B cell (primary cell): ENCODE measurements at regions of chr16 and their contacts with region 1.

Region 1: DNA sequence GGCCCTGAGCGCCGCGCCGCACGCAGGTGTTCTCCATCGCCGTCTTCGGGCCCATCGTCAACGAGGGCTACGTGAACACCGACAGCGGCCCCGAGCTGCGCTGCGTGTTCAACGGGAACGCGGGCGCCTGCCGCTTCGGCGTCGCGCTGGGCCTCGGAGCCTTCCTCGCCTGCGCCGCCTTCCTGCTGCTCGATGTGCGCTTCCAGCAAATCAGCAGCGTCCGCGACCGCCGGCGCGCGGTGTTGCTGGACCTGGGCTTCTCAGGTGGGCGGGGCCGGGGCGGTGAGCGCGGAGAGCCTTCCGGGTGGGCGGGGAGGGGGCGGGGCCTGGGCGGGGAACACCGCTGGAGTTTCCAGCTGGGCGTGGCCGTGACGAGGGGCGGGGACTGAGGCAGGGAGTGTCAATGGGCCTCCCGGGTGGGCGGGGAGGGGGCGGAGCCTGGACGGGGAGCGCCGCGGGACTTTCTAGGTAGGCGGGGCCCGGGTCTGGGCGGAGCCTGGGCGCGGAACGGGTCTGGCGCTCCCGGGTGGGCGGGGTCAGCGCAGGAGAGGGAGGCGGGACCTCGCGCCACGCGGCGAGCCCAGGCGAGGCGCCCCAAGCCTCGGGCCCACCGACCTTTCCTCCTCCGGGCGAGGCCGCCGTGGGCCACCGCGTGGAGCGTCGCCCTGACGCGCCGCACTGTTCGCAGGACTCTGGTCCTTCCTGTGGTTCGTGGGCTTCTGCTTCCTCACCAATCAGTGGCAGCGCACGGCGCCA is 2.4 kb downstream of the SYNGR3 start:
- DNase-seq: peak; percentile 96
- ATAC-seq: peak; percentile 77
- H3K4me3 ChIP-seq: peak overlapping the region in 4 of 5 experiments; percentile 51 to 93 (median 69)
- H3K4me3 Mint-ChIP-seq: peak overlapping the region; percentile 91
- H3K27ac ChIP-seq: peak overlapping the region; percentile 86 to 92
- H3K27ac Mint-ChIP-seq: peak overlapping the region; percentile 97
- H3K4me1 ChIP-seq: peaks cover 24 to 35% of the 10 kb centered on the region in 2 donors
- H3K4me1 Mint-ChIP-seq: peaks cover 33% of the 10 kb centered on the region
- H3K27me3 ChIP-seq: no peaks in the 10 kb centered on the region
- H3K27me3 Mint-ChIP-seq: no peaks in the 10 kb centered on the region
- CTCF ChIP-seq: no peak

Region 2: DNA sequence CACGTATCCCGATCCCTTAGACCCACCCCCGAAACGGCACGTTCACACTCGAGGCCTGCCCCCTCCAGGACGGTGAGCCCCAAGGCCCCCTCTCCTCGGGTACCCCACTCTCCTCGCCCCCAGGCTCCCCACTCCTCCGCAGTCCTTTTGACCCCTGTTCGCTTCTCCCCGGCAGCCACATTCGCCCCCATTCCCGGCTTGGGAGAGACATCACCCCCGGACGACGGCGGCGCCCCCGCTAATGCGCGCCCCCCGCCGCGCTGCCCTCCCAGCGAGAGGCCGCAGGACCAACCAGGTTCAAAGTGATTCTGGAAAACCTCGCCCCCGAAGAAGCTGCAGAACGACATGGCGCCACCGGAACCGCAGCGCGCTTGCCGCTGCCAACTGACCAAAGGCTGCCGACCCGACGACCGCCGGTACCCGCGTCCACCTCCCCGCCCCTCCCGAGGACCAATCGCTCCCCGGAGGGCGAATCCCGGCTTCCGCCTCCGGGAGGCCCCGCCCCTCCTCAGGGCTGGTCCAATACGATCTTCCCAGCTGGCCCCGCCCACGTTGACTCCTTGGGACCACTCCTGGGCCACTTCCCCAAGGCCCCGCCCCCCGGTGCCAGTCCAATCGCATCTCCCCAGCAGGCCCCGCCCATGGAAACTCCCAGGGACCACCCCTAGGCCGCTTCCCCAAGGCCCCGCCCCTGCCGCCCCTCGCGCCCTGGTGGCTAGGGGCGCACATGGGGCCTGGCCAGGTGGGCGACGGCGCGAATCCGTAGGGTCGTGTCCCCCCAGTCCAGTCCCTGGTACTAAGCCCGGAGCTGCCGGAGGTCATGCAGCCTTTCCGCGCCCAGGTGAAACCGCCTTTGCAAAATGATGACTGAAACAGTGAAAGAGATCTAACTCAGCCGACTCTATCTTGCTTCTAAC is 49.1 kb before region 1 on chr16 and contains the start of gene MSRB1:
- CTCF ChIA-PET with region 1: no interaction called
- POLR2A ChIA-PET with region 1: interaction called, 3 read pairs
- intact Hi-C with region 1: loop called (anchors 10 kb)
- DNase-seq: peak; percentile 99
- ATAC-seq: peak; percentile 99
- H3K4me3 ChIP-seq: peak within 1 kb of the TSS; percentile 42 to 83 (median 73)
- H3K4me3 Mint-ChIP-seq: peak within 1 kb of the TSS; percentile 90
- H3K27ac ChIP-seq: peak within 1 kb of the TSS; percentile 25 to 64
- H3K27ac Mint-ChIP-seq: peak within 1 kb of the TSS; percentile 80
- H3K4me1 ChIP-seq: peaks cover 14 to 19% of the 10 kb centered on the region in 2 donors
- H3K4me1 Mint-ChIP-seq: peaks cover 21% of the 10 kb centered on the region
- H3K27me3 ChIP-seq: no peaks in the 10 kb centered on the region
- H3K27me3 Mint-ChIP-seq: no peaks in the 10 kb centered on the region
- CTCF ChIP-seq: no peak
- total RNA-seq, gene MSRB1: 15.2 and 17.5 TPM in 2 replicates

Region 3: DNA sequence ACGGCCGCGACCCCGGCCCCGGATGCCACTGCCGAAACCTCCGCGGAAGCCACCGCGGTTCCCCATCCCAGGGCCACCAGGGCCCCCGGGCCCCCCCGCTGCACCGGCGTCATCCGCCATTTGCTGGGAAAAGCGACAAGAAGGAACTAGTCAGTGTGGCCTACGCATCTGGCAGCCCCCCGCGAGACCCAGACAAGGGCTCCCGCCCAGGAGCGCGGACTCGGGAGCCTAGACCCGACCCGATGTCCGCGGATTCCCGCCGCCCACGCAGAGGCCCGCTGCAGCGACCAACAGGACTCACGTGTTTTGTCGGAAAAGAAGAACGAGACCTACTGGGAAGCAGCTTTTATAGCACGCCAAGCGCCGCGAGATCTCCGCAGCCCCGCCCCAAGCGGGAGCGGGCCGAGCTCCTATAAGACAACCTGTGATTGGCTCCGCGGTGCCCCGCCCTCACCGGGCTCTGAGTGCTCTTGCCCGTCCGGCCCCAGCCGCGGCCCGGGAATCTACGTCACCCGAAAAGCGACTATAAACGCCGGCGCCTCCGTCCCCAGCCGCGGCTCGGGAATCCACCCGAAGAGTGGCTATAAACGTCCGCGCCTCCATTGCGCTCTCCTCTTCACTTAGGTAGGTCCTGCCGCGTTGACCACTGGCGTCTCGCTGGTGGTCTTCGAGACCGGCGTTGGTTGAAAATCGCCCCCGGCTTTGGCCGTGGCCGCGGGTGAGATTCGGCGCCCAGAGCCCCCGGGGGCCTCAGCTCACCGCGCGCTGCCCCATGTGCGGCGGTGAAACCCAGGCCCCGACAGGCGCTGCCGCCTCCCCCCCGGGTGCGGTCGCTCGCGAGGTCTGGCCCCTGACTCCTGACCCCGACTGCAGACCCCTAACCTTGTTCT is 27.4 kb before region 1 on chr16 and contains the start of gene RPS2:
- CTCF ChIA-PET with region 1: interaction called, 3 read pairs
- POLR2A ChIA-PET with region 1: interaction called, 36 read pairs
- intact Hi-C with region 1: loop called (anchors 2 kb)
- DNase-seq: peak; percentile 99
- ATAC-seq: peak; percentile 93
- H3K4me3 ChIP-seq: peak within 1 kb of the TSS; percentile 60 to 94 (median 76)
- H3K4me3 Mint-ChIP-seq: peak within 1 kb of the TSS; percentile 94
- H3K27ac ChIP-seq: peak within 1 kb of the TSS; percentile 83 to 100
- H3K27ac Mint-ChIP-seq: peak within 1 kb of the TSS; percentile 97
- H3K4me1 ChIP-seq: peaks cover 26 to 49% of the 10 kb centered on the region in 2 donors
- H3K4me1 Mint-ChIP-seq: peaks cover 42% of the 10 kb centered on the region
- H3K27me3 ChIP-seq: no peaks in the 10 kb centered on the region
- H3K27me3 Mint-ChIP-seq: no peaks in the 10 kb centered on the region
- CTCF ChIP-seq: no peak
- total RNA-seq, gene RPS2: 3,155 and 3,261 TPM in 2 replicates

Region 4: DNA sequence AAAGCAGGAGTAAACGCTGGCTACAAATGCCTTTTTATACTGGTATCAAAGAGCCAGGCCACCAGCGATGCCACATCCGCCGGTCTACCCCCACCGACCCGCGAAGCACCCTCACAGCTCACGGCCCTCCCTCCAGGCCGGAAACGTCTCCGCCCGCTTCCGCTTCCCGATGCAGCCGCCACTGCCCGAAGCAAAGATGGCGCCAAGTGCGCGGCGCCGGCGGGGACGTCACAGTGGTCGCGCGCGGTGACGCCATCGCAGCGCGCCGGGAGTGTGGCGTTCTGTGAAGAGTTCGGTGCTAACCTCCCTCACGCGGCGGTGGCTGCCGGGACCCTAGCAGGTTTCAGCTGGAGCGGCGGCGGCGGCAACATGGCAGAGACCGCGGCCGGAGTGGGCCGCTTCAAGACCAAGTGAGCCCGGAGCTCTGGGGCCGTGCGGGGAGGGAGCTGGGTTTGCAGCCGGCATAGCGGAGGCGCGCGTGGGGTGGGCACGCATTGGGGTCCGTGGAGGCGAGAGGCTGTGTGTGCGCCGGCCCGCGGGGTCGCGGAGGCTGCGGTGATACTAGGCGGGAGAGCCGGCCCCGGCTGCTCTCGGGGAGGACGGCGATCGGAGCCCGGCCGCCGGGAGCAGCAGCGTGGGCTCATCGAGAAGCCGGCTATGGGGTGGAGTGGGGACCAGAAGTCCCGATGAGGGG is 20.2 kb before region 1 on chr16 and contains the start of gene TBL3:
- CTCF ChIA-PET with region 1: no interaction called
- POLR2A ChIA-PET with region 1: interaction called, 15 read pairs
- intact Hi-C with region 1: loop called (anchors 1 kb)
- DNase-seq: peak; percentile 98
- ATAC-seq: peak; percentile 98
- H3K4me3 ChIP-seq: peak within 1 kb of the TSS; percentile 86 to 91 (median 87)
- H3K4me3 Mint-ChIP-seq: peak within 1 kb of the TSS; percentile 96
- H3K27ac ChIP-seq: peak within 1 kb of the TSS; percentile 82 to 85
- H3K27ac Mint-ChIP-seq: peak within 1 kb of the TSS; percentile 98
- H3K4me1 ChIP-seq: peaks cover 9 to 19% of the 10 kb centered on the region in 2 donors
- H3K4me1 Mint-ChIP-seq: peaks cover 21% of the 10 kb centered on the region
- H3K27me3 ChIP-seq: peaks cover 0 to 12% (median 1%) of the 10 kb centered on the region in 4 experiments
- H3K27me3 Mint-ChIP-seq: no peaks in the 10 kb centered on the region
- CTCF ChIP-seq: no peak
- total RNA-seq, gene TBL3: 31.9 and 32.2 TPM in 2 replicates

Region 5: GRCh38 chr16:2003827-2004641 is 11.9 kb after region 1 on chr16:
- CTCF ChIA-PET with region 1: interaction called, 32 read pairs
- POLR2A ChIA-PET with region 1: interaction called, 9 read pairs
- intact Hi-C with region 1: loop called (anchors 1 kb)
- DNase-seq: peak; percentile 88
- ATAC-seq: peak; percentile 99
- H3K4me3 ChIP-seq: no peak overlapping the region
- H3K4me3 Mint-ChIP-seq: no peak overlapping the region
- H3K27ac ChIP-seq: no peak overlapping the region
- H3K27ac Mint-ChIP-seq: no peak overlapping the region
- H3K4me1 ChIP-seq: peaks cover 33 to 45% of the 10 kb centered on the region in 2 donors
- H3K4me1 Mint-ChIP-seq: peaks cover 41% of the 10 kb centered on the region
- H3K27me3 ChIP-seq: no peaks in the 10 kb centered on the region
- H3K27me3 Mint-ChIP-seq: no peaks in the 10 kb centered on the region
- CTCF ChIP-seq: peak; percentile 93

Region 6: DNA sequence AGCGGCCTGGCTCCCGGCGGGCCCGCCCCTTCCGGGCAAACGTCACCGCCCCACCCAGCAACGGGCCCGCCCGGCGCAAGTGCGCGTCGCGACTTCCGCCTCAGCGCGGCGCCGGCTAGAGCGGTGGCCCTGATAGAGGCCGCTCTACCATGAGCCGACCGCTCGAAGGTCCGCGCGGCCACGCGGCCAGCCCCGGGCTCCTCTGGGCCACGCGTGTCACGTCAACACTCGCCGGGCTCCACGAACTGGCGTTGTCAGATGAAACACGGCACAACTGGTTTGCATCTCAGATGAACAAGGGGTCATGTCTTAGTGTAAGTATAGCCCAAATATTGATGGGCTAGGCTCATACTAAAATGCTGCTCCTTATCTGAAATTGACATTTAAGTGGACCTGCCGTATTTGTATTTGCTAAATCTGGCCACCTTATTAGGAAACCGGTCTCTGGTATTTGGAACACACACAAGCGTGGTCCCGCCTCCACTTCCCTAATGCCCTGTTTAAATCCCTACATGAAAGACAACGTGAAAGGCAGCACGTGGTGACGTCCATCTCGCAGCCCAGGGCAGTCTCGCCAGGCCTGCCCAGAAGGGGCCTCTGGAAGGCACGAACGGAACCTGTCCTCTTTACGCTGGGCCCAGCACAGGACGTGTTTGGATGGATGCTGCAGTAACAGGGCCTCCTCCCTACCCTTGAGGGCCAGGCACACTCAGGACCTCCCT is 17.8 kb after region 1 on chr16 and contains the start of gene ZNF598:
- CTCF ChIA-PET with region 1: interaction called, 32 read pairs
- POLR2A ChIA-PET with region 1: interaction called, 5 read pairs
- intact Hi-C with region 1: loop called (anchors 1 kb)
- DNase-seq: peak; percentile 90
- ATAC-seq: peak; percentile 97
- H3K4me3 ChIP-seq: peak within 1 kb of the TSS; percentile 61 to 87 (median 77)
- H3K4me3 Mint-ChIP-seq: peak within 1 kb of the TSS; percentile 95
- H3K27ac ChIP-seq: peak within 1 kb of the TSS; percentile 87 to 95
- H3K27ac Mint-ChIP-seq: peak within 1 kb of the TSS; percentile 95
- H3K4me1 ChIP-seq: peaks cover 35 to 44% of the 10 kb centered on the region in 2 donors
- H3K4me1 Mint-ChIP-seq: peaks cover 38% of the 10 kb centered on the region
- H3K27me3 ChIP-seq: no peaks in the 10 kb centered on the region
- H3K27me3 Mint-ChIP-seq: no peaks in the 10 kb centered on the region
- CTCF ChIP-seq: no peak
- total RNA-seq, gene ZNF598: 49.5 and 50.3 TPM in 2 replicates

Region 7: GRCh38 chr16:2459647-2460390 is 467.7 kb after region 1 on chr16 and contains the start of gene TEDC2:
- CTCF ChIA-PET with region 1: no interaction called
- POLR2A ChIA-PET with region 1: no interaction called
- intact Hi-C with region 1: no loop called
- DNase-seq: peak; percentile 96
- ATAC-seq: peak; percentile 100
- H3K4me3 ChIP-seq: peak within 1 kb of the TSS; percentile 17 to 84 (median 54)
- H3K4me3 Mint-ChIP-seq: peak within 1 kb of the TSS; percentile 94
- H3K27ac ChIP-seq: peak within 1 kb of the TSS in 1 of 2 donors; percentile 34
- H3K27ac Mint-ChIP-seq: peak within 1 kb of the TSS; percentile 68
- H3K4me1 ChIP-seq: peaks cover 10 to 16% of the 10 kb centered on the region in 2 donors
- H3K4me1 Mint-ChIP-seq: peaks cover 6% of the 10 kb centered on the region
- H3K27me3 ChIP-seq: no peaks in the 10 kb centered on the region
- H3K27me3 Mint-ChIP-seq: no peaks in the 10 kb centered on the region
- CTCF ChIP-seq: no peak
- total RNA-seq, gene TEDC2: 1.5 and 2.9 TPM in 2 replicates